Prostate gland (tissue), 2 donors: ENCODE measurements at regions of chr14 and their contacts with region 1.

Region 1: DNA sequence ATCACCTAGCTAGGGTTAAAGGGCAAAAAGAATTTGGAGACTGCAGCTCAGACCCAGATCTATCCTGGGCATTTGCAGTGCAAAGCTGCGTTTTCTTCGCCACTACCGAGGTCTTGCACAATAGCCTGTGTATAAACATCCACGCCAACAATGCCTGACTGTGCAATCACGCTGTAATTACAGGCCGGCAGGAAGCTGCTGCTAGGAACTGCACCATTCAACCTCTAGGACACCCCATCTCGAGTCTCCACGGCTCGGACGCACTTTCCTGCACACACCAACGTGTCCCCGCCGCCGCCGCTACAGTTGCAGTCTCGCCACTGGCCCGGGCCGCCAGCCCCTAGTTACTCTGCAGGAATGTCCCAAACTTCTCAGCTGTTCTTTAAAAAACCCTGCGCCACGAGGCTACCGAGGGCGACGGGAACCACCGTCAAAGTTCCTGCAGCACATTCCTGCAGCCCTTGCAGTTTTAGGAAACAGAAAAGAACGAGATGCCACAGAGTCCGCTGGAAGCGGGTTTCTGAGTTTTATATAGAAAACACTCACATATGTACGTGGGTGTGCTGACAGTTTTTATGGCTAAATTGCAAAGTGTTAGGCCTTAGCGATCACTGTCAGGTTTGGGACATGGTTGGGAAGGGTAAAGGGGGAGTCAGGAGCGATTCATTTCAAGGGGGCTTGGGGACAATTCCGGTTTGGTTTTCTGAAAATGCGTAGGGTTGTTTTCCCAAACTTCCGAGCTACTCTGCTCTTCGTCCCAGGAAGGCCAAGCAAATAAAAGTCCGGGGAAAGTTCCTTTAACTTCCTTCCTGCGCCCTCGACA is 65.5 kb upstream of the PTGR2 start:
- DNase-seq: peak; percentile 81
- H3K4me3 ChIP-seq: peak overlapping the region; percentile 75 to 82
- H3K27ac ChIP-seq: peak overlapping the region; percentile 98
- H3K4me1 ChIP-seq: peaks cover 25% of the 10 kb centered on the region
- H3K27me3 ChIP-seq: no peaks in the 10 kb centered on the region
- CTCF ChIP-seq: peak in 2 of 4 experiments; percentile 26 to 40
- POLR2A ChIP-seq: peak; percentile 36

Region 2: DNA sequence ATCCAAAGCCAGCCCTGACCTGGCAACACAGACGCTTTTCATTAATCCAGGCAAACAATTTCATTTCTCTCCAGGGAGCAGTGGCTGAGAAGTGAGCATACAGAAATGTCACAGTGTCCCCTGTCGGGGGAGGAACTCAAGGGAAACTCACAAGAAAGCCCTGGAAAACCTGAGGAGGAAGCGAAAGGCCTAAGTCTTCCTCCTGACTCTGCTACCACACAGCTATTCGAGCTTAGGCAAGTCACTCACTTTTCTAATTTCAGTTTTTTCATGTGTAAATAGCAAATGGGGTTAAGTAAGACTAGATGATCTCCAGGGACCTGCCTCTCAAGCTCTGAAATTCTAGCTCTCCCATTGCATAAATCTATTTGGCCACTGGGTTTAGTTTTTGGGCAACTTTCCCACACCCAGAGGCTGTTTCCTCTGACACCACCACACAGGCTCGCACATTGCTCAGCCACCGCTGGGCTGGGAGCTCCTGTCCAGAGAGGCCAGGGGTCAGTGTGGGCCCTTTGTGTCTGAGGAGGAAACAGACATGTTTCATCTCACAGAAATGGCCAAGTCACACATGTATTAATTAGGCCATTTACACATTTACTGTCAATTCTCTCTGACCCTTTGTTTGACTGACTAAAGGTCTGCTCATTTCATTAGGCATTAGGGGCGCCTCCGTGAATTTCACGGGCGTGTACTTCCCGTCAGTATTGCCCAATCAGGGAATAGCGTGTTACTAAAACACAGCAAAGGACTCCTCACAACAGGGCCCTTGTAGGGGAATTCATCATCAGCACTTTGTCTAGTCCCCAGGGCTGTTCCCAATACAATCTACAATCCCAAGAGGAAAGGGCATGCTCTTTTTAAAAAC is 62.1 kb before region 1 on chr14:
- intact Hi-C with region 1: no loop called
- DNase-seq: peak; percentile 47
- H3K4me3 ChIP-seq: no peak overlapping the region
- H3K27ac ChIP-seq: peak overlapping the region; percentile 40 to 60
- H3K4me1 ChIP-seq: no peaks in the 10 kb centered on the region
- H3K27me3 ChIP-seq: no peaks in the 10 kb centered on the region
- CTCF ChIP-seq: peak in 2 of 4 experiments; percentile 10 to 28
- POLR2A ChIP-seq: no peak

Region 3: GRCh38 chr14:73759714-73760597 is 26.1 kb before region 1 on chr14:
- intact Hi-C with region 1: loop called (anchors 2 kb)
- DNase-seq: peak; percentile 98
- H3K4me3 ChIP-seq: peak overlapping the region; percentile 62 to 86
- H3K27ac ChIP-seq: peak overlapping the region; percentile 92 to 95
- H3K4me1 ChIP-seq: peaks cover 68% of the 10 kb centered on the region
- H3K27me3 ChIP-seq: no peaks in the 10 kb centered on the region
- CTCF ChIP-seq: peak in 2 of 4 experiments; percentile 18 to 22
- POLR2A ChIP-seq: peak; percentile 82